ENCODE measurements at regions of chr14 and their contacts with region 1.

Region 1: DNA sequence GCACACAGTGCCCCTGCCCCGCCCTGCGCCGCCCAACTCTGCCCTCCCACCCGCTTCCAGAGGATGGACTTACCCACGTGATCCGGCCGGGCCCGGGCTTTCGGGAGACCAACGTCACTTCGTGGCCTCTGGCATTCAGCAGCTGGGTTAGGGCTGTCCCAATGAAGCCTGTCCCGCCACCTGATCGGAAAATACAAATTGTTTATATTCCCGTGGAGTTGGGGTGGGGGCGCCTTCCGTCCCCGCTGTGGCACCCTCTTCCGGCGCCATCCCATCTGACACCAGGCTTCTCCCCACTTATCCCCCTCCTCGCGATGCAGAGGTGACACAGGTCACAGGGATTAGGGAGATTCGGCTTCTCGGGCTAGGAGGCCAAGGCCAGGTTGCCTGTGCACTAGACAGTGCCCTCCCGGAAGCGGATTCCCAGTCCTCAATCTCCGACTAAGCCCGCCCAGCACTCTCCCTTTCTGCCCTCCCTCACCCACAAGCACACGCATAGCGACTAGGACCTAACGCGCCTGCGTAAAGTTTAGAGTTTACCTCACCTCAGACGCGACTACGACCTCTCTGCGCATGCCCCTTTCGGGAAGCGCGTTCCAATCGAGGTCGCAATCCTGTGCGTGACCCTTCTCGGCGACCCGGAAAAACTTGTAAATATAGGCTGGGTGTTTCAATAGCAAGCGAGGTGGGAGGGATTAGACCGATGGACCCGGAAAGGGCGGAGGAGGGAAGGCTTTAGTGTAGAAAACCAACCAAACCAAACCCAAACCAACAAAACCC is at the start of gene SDR39U1:
- DNase-seq: peak; percentile 98
- ATAC-seq: peak; percentile 91
- H3K4me3 Mint-ChIP-seq: peak within 1 kb of the TSS; percentile 86
- H3K27ac Mint-ChIP-seq: peak within 1 kb of the TSS; percentile 98
- H3K4me1 Mint-ChIP-seq: peaks cover 40% of the 10 kb centered on the region
- H3K27me3 Mint-ChIP-seq: no peaks in the 10 kb centered on the region
- CTCF ChIP-seq: no peak
- total RNA-seq, gene SDR39U1: 43.6 to 55.5 TPM

Region 2: GRCh38 chr14:24518851-24519250 is 76.4 kb after region 1 on chr14:
- CTCF ChIA-PET with region 1: no interaction called
- POLR2A ChIA-PET with region 1: no interaction called
- intact Hi-C with region 1: no loop called
- DNase-seq: no peak
- ATAC-seq: no peak
- H3K4me3 Mint-ChIP-seq: no peak overlapping the region
- H3K27ac Mint-ChIP-seq: no peak overlapping the region
- H3K4me1 Mint-ChIP-seq: peaks cover 5% of the 10 kb centered on the region
- H3K27me3 Mint-ChIP-seq: peaks cover 11% of the 10 kb centered on the region
- CTCF ChIP-seq: no peak

Region 3: DNA sequence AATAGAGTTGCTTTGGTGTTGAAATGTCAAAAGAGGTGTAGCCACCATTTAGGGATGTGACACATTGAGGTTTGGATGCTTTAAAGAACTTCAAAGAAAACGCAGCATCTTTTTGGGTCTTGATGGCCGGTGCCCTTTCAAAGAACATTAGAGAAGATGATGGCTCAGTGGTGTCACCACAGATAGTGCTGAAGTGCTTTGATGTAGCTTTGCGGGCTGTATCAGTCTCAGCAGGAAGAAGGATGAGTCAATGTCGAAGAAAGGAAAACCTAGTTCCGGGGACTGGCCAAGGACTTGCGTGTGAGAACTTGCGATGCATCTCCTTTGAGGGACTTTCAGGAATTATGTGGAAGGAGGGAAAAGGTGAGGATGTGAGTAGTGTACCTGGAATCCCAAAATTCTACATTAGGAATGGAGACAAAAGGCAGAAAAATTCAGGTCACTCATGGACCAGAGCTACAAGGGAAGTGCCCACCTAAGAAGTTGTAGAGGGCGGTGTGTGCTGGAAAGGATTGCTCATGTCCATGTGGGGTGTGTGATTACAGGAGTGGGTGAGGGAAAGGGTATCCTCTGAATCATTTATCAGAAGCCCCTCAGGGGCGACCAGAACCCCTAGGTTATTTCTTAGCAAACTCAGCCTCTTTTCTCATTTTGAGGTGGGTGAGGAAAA is 231.2 kb after region 1 on chr14:
- CTCF ChIA-PET with region 1: interaction called, 3 read pairs
- POLR2A ChIA-PET with region 1: interaction called, 8 read pairs
- intact Hi-C with region 1: loop called (anchors 5 kb)
- DNase-seq: peak; percentile 91
- ATAC-seq: peak; percentile 65
- H3K4me3 Mint-ChIP-seq: peak overlapping the region; percentile 71
- H3K27ac Mint-ChIP-seq: peak overlapping the region; percentile 99
- H3K4me1 Mint-ChIP-seq: peaks cover 85% of the 10 kb centered on the region
- H3K27me3 Mint-ChIP-seq: no peaks in the 10 kb centered on the region
- CTCF ChIP-seq: no peak